ENCODE measurements at regions of chr1 and their contacts with region 1.

Region 1: DNA sequence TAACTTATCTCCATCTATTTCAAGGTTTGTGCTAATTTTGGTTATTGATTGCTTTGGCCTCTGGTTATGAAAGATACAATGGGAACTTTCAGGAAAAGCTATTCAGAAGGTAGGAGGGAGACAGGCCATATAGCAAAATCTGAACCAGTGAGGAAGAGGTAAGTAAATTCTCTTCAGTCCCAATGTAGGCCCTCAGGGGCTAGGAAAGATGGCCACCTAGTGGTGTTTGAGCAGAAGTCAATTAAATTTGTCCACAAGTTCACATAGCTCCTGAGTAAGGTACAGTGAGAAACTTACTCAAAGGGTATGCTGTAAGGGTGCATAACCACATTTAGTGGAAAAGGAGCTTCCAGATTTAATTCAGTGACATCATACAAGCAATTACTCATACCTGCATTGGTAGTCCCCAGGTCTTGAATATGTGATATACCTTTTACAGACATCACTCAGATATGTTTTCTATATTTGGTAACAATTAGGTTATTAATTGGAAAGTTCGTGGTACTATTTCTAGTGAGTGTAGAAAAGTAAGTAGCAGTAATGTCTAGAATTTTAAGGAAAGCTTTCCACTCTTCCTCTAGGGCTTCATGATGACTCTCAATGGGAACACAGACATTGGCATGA is 21.4 kb upstream of the FMO1 start:
- DNase-seq: peak; percentile 55
- H3K4me3 ChIP-seq: no peak overlapping the region
- H3K27ac ChIP-seq: no peak overlapping the region
- H3K4me1 ChIP-seq: peaks cover 20% of the 10 kb centered on the region
- H3K27me3 ChIP-seq: no peaks in the 10 kb centered on the region
- CTCF ChIP-seq: peak; percentile 53 to 86

Region 2: DNA sequence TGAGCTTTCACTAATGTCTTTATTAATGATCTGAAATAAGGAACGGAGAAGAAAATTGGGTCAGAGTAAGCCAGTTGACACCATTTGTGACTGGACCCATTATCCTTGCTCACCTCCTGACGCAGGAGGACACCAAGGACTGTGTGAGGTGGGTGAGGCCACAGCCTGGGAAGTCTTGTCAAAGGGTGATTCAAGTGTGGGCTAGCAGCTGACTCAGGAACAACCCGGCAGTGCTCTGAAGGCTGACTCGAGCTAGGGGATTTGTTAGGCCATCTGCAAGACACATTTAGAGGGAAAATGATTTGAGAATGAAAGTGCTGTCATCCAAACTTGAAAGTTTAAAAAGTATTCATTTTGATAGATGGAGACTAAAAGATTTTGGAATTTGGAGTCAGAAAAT is 541.7 kb before region 1 on chr1:
- CTCF ChIA-PET with region 1: no interaction called
- dilution Hi-C with region 1: no loop called
- in situ Hi-C with region 1: no loop called
- intact Hi-C with region 1: loop called (anchors 2 kb)
- DNase-seq: peak; percentile 45
- H3K4me3 ChIP-seq: no peak overlapping the region
- H3K27ac ChIP-seq: no peak overlapping the region
- H3K4me1 ChIP-seq: no peaks in the 10 kb centered on the region
- H3K27me3 ChIP-seq: no peaks in the 10 kb centered on the region
- CTCF ChIP-seq: no peak

Region 3: GRCh38 chr1:170967042-170967910 is 259.6 kb before region 1 on chr1:
- CTCF ChIA-PET with region 1: interaction called, 7 read pairs
- dilution Hi-C with region 1: no loop called
- in situ Hi-C with region 1: no loop called
- intact Hi-C with region 1: loop called (anchors 1 kb)
- DNase-seq: peak; percentile 11
- H3K4me3 ChIP-seq: no peak overlapping the region
- H3K27ac ChIP-seq: no peak overlapping the region
- H3K4me1 ChIP-seq: peaks cover 18% of the 10 kb centered on the region
- H3K27me3 ChIP-seq: no peaks in the 10 kb centered on the region
- CTCF ChIP-seq: peak; percentile 54 to 67

Region 4: DNA sequence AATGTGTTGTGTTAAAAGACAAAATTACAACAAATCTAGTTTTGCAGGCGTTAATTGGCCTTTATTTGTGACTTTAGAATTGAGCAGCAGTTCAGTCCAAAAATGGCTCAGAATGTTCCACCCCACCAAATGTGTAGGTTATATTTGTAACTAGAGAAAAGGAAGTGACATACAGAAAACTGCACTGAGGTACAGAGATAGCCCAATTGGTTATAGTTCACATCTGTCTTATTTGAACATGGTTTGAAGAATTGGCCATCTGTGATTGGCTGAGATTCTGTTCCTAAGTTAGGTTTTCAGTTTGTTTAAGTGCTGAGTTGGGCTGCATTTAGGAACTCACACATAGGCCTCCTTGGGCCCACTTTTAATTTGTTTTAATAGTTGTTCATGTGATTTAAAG is 53.8 kb before region 1 on chr1:
- CTCF ChIA-PET with region 1: interaction called, 3 read pairs
- dilution Hi-C with region 1: loop called (anchors 5 kb)
- in situ Hi-C with region 1: no loop called
- intact Hi-C with region 1: loop called (anchors 1 kb)
- DNase-seq: no peak
- H3K4me3 ChIP-seq: no peak overlapping the region
- H3K27ac ChIP-seq: no peak overlapping the region
- H3K4me1 ChIP-seq: no peaks in the 10 kb centered on the region
- H3K27me3 ChIP-seq: no peaks in the 10 kb centered on the region
- CTCF ChIP-seq: no peak

Region 5: GRCh38 chr1:171300401-171300800 is 73.5 kb after region 1 on chr1:
- CTCF ChIA-PET with region 1: interaction called, 12 read pairs
- dilution Hi-C with region 1: no loop called
- in situ Hi-C with region 1: no loop called
- intact Hi-C with region 1: no loop called
- DNase-seq: no peak
- H3K4me3 ChIP-seq: no peak overlapping the region
- H3K27ac ChIP-seq: no peak overlapping the region
- H3K4me1 ChIP-seq: no peaks in the 10 kb centered on the region
- H3K27me3 ChIP-seq: no peaks in the 10 kb centered on the region
- CTCF ChIP-seq: no peak